Endothelial cell of umbilical vein (primary cell): ENCODE measurements at regions of chr9 and their contacts with region 1.

Region 1: DNA sequence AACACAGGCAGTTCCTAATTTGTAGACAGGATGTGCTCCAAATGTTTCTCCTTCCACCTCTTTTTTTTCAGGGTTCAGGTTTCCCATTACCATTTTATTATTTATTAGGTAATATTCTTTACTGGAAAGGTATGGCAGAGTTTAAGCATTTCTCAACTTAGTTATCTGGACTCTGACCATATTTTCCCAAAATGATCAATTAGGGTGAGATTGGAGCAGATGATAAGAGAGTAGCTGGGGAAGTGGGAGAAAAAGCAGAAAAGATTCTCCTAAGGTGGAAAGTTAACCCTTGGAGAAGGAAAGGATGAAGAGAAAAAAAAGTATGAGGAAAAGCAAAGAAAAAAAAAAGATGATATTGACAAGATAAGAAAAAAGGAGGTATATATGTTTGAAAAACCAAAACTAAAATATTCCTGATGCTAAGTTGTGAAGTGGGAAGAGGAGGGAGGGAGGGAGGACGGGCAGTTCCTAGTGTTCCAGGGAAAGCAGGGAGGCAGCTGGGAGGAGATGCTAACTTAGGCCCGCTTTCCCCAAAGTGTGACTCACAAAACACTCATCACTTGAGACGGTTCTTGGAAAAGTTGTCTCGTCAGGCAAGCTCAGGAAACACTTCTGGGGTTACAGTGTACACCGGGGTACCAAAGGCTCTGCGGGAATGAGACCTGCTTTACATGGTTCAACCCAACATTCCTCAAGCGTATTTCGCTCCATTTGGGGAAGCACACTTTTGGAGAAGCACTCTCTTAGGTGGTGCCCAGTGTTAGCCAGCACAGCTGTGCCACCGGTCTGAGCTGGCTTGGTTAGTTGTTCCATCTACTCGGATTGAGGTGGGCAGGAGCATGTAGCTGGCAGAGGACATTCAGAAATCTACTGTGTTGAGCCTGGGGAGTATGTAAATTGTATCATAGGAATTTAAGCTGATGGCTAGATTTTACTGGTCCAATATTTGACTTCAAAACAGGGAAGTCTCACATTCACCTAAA is 35.1 kb downstream of the B4GALT1 start:
- DNase-seq: peak; percentile 24
- H3K4me3 ChIP-seq: no peak overlapping the region
- H3K27ac ChIP-seq: no peak overlapping the region
- H3K4me1 ChIP-seq: peaks cover 17% of the 10 kb centered on the region
- H3K27me3 ChIP-seq: no peaks in the 10 kb centered on the region
- CTCF ChIP-seq: no peak
- POLR2A ChIP-seq: no peak

Region 2: GRCh38 chr9:33106827-33107621 is 25.1 kb before region 1 on chr9:
- CTCF ChIA-PET with region 1: interaction called, 4 read pairs
- POLR2A ChIA-PET with region 1: no interaction called
- dilution Hi-C with region 1: no loop called
- intact Hi-C with region 1: loop called (anchors 1 kb)
- DNase-seq: peak; percentile 85
- H3K4me3 ChIP-seq: no peak overlapping the region
- H3K27ac ChIP-seq: peak overlapping the region; percentile 87
- H3K4me1 ChIP-seq: peaks cover 22% of the 10 kb centered on the region
- H3K27me3 ChIP-seq: no peaks in the 10 kb centered on the region
- CTCF ChIP-seq: no peak
- POLR2A ChIP-seq: peak; percentile 41